ENCODE measurements at regions of chr3 and their contacts with region 1.

Region 1: GRCh38 chr3:194671900-194672808 is at the start of gene LSG1:
- DNase-seq: peak; percentile 62
- H3K4me3 ChIP-seq: peak within 1 kb of the TSS; percentile 85
- H3K27me3 ChIP-seq: peaks cover 6% of the 10 kb centered on the region
- CTCF ChIP-seq: no peak
- polyA plus RNA-seq, gene LSG1: 23.9 and 35.4 TPM in 2 replicates

Region 2: GRCh38 chr3:194369525-194370279 is 302.5 kb before region 1 on chr3 and contains the start of gene LRRC15:
- CTCF ChIA-PET with region 1: no interaction called
- POLR2A ChIA-PET with region 1: no interaction called
- DNase-seq: no peak
- H3K4me3 ChIP-seq: no peak within 1 kb of the TSS
- H3K27me3 ChIP-seq: peaks cover 2% of the 10 kb centered on the region
- CTCF ChIP-seq: no peak
- polyA plus RNA-seq, gene LRRC15: 0.67 and 1.2 TPM in 2 replicates

Region 3: GRCh38 chr3:194623449-194624290 is 48.5 kb before region 1 on chr3:
- CTCF ChIA-PET with region 1: no interaction called
- POLR2A ChIA-PET with region 1: interaction called, 18 read pairs
- DNase-seq: no peak
- H3K4me3 ChIP-seq: no peak overlapping the region
- H3K27me3 ChIP-seq: no peaks in the 10 kb centered on the region
- CTCF ChIP-seq: no peak

Region 4: GRCh38 chr3:194661374-194661773 is 10.8 kb before region 1 on chr3:
- CTCF ChIA-PET with region 1: interaction called, 16 read pairs
- POLR2A ChIA-PET with region 1: interaction called, 5 read pairs
- DNase-seq: no peak
- H3K4me3 ChIP-seq: no peak overlapping the region
- H3K27me3 ChIP-seq: no peaks in the 10 kb centered on the region
- CTCF ChIP-seq: no peak

Region 5: GRCh38 chr3:194696475-194697091 is 24.4 kb after region 1 on chr3:
- CTCF ChIA-PET with region 1: no interaction called
- POLR2A ChIA-PET with region 1: no interaction called
- DNase-seq: no peak
- H3K4me3 ChIP-seq: no peak overlapping the region
- H3K27me3 ChIP-seq: peaks cover 3% of the 10 kb centered on the region
- CTCF ChIP-seq: no peak

Region 6: GRCh38 chr3:195106418-195106906 is 434.3 kb after region 1 on chr3:
- CTCF ChIA-PET with region 1: interaction called, 12 read pairs
- POLR2A ChIA-PET with region 1: no interaction called
- DNase-seq: no peak
- H3K4me3 ChIP-seq: no peak overlapping the region
- H3K27me3 ChIP-seq: no peaks in the 10 kb centered on the region
- CTCF ChIP-seq: peak; percentile 88

Region 7: DNA sequence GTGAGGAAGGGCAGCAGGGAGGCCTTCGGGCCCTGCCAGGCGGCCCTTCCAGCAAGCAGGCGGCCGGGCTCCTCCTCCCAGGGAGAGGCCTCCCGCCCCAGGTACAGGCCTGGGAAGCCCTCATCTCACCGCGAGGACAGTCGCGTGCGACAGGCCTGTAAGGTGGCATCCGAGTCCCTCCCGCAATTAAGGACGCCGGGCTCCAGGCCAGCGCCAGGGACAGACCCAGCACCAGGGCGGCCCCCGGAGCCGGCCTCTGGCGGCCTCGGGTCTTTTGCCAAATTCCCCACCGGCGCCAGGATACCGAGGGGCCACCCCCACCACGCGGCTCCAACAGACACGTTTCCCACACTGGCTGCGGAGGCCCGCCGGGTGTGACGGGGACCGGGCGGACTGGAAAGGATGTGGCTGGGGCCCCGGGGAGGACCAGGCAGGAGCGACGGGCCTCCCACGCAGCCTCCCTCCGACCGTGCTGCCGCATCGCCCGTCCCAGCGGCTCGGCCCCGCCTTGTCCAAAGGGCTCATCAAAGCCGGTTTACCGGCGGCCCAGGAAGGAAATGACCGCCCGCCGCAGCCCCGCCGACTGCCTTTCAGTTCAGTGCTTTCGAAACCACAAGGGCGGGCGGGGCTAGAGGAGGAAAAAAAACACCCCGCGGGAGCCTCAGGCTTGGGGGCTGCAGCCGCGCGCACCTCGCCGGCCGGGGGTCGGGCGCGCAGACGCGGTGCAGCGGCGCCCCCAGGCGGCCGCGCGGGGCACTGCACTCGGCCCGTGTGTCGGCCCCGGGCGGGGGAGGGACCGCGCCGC is 587.5 kb after region 1 on chr3:
- CTCF ChIA-PET with region 1: interaction called, 19 read pairs
- POLR2A ChIA-PET with region 1: no interaction called
- DNase-seq: peak; percentile 62
- H3K4me3 ChIP-seq: peak overlapping the region; percentile 54
- H3K27me3 ChIP-seq: no peaks in the 10 kb centered on the region
- CTCF ChIP-seq: no peak

Measured in BJ (cell line).